Mammary epithelial cell (primary cell): ENCODE measurements at regions of chr10 and their contacts with region 1.

Region 1: DNA sequence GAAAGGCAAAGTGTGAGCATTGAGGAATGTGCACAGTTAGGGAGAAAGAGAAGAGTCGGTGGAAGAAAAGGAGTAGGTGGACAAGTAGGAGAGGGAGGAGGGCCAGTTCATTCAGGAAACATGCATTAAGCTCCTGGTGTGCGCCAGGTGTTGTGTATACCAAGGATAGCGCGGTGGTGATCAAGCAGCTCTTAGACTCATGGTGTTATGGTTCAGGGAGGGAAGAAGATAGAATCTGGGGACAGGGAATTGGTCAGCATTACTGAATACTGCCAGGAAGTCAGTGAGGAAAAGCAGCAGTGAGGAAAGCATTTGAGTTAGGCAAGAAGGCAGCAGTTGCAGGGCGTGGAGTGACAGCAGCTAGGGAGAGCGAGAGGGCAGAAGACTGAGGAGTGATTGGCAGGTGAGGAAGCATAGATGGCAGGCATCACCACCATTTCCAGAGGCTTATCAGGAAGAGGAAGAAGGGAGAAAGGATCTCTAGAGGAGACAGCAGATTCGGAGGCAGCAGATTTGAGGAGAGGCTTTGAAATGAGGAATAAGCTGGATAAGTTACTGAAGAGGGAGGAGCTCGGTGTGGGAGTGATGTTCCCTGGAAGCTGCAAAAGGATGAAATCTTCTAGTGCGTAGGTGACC is 265.6 kb downstream of the GFRA1 start:
- DNase-seq: no peak
- H3K4me3 ChIP-seq: no peak overlapping the region
- H3K27ac ChIP-seq: no peak overlapping the region
- H3K4me1 ChIP-seq: no peaks in the 10 kb centered on the region
- H3K27me3 ChIP-seq: no peaks in the 10 kb centered on the region
- CTCF ChIP-seq: no peak

Region 2: GRCh38 chr10:115941361-115941771 is 66.0 kb before region 1 on chr10:
- CTCF ChIA-PET with region 1: no interaction called
- dilution Hi-C with region 1: loop called (anchors 5 kb)
- in situ Hi-C with region 1: no loop called
- intact Hi-C with region 1: no loop called
- DNase-seq: no peak
- H3K4me3 ChIP-seq: no peak overlapping the region
- H3K27ac ChIP-seq: no peak overlapping the region
- H3K4me1 ChIP-seq: no peaks in the 10 kb centered on the region
- H3K27me3 ChIP-seq: no peaks in the 10 kb centered on the region
- CTCF ChIP-seq: no peak

Region 3: DNA sequence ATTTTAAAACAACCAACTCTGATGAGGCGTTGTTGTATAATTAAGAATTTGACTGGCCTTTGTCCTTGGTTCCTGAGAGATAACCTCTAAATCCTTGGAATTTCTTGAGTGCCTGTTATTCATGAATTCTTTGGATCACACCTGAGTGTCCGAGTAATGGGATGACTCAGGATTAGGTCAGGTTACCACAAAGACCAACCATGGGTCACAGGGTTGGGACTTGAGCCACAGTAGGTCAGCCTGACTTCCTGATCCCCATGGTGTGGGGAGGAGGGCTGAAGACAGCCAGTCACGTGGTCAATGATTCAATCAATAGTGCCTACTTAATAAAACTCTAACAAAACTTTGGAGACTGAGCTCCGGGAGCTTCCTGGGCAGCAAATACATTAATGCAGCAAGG is 73.2 kb after region 1 on chr10:
- CTCF ChIA-PET with region 1: no interaction called
- dilution Hi-C with region 1: no loop called
- in situ Hi-C with region 1: no loop called
- intact Hi-C with region 1: no loop called
- DNase-seq: peak; percentile 30
- H3K4me3 ChIP-seq: no peak overlapping the region
- H3K27ac ChIP-seq: no peak overlapping the region
- H3K4me1 ChIP-seq: no peaks in the 10 kb centered on the region
- H3K27me3 ChIP-seq: no peaks in the 10 kb centered on the region
- CTCF ChIP-seq: no peak